PC-3 (cell line): ENCODE measurements at regions of chr3 and their contacts with region 1.

Region 1: GRCh38 chr3:35664460-35664919 is 25.2 kb downstream of the ARPP21 start:
- DNase-seq: no peak
- ATAC-seq: no peak
- H3K4me3 ChIP-seq: no peak overlapping the region
- H3K27ac ChIP-seq: no peak overlapping the region
- H3K4me1 ChIP-seq: peaks cover 21% of the 10 kb centered on the region
- H3K27me3 ChIP-seq: no peaks in the 10 kb centered on the region
- CTCF ChIP-seq: no peak

Region 2: GRCh38 chr3:33883538-33883950 is 1780.9 kb before region 1 on chr3:
- CTCF ChIA-PET with region 1: no interaction called
- POLR2A ChIA-PET with region 1: no interaction called
- intact Hi-C with region 1: loop called (anchors 5 kb)
- DNase-seq: peak; percentile 85
- ATAC-seq: peak; percentile 41
- H3K4me3 ChIP-seq: no peak overlapping the region
- H3K27ac ChIP-seq: no peak overlapping the region
- H3K4me1 ChIP-seq: no peaks in the 10 kb centered on the region
- H3K27me3 ChIP-seq: no peaks in the 10 kb centered on the region
- CTCF ChIP-seq: peak; percentile 96

Region 3: GRCh38 chr3:35064761-35065160 is 599.7 kb before region 1 on chr3:
- CTCF ChIA-PET with region 1: no interaction called
- POLR2A ChIA-PET with region 1: no interaction called
- intact Hi-C with region 1: loop called (anchors 2 kb)
- DNase-seq: no peak
- ATAC-seq: no peak
- H3K4me3 ChIP-seq: no peak overlapping the region
- H3K27ac ChIP-seq: no peak overlapping the region
- H3K4me1 ChIP-seq: no peaks in the 10 kb centered on the region
- H3K27me3 ChIP-seq: no peaks in the 10 kb centered on the region
- CTCF ChIP-seq: no peak

Region 4: DNA sequence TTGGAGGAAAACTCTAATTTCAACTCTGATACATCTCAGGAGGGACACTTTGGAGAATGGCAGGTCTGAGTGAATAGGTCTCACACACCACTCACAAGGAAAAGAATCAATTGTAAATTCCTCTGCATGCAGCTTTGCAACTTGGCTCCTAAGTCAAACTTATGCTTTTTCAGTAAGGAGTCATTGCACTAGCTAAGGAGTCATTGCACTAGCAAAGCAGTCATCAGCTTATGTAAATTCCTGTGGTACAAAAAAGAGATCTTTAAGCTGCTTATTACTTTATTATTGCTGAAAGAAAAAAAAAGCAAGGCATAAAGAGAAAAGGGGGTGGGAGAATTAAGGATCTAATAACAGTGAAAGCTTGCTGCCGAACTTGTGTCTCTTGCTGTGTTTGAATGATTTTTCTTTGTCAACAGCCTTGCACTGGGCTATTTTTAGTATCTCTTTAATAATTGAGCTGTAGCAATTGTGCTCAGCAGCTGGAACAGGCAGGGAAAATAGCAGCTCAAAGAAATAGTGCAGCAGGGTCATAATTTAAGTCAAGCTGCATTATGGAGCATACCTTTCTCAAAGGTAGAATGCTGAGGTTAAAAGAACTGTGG is 179.5 kb before region 1 on chr3:
- CTCF ChIA-PET with region 1: no interaction called
- POLR2A ChIA-PET with region 1: no interaction called
- intact Hi-C with region 1: loop called (anchors 5 kb)
- DNase-seq: no peak
- ATAC-seq: no peak
- H3K4me3 ChIP-seq: no peak overlapping the region
- H3K27ac ChIP-seq: no peak overlapping the region
- H3K4me1 ChIP-seq: no peaks in the 10 kb centered on the region
- H3K27me3 ChIP-seq: no peaks in the 10 kb centered on the region
- CTCF ChIP-seq: no peak

Region 5: DNA sequence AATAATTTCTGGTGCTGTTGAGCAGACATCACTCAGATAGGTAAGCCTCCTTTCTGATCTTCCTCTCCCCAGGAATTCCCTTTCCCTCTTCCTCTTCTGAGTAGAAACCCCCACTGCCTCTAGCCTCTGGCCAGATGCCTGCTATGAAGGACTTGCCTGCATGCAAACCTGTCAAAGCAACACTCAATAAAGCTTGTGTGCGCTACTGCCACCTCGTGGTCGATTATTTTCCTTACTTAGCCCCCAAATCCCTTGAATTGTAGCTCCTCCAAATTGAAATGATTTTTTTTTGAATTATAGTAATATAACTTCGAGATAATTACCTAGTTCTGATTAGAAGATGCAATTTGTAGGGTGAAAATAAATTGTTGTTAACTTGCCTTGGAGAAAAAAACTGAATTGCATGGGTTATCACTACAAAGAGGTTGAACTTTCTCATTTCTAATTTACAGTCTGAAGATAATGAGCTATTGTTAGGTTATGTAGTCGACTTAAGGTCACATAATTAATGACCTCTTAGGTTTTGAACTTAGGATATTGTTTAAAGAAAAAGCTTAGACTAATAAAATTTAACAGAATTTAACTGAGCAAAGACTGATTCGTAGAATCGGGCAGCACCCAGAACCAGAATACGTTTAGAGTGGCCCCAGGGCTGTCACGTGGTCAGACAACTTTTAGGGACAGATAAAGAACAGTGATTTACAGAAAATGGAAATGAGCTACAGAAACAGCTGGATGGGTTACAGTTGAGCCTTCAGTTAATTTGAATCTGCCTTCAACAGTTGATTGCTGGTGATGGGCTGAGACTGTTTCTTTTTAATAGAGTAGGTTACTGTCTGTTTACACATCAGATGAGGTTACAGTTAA is 244.1 kb after region 1 on chr3:
- CTCF ChIA-PET with region 1: interaction called, 12 read pairs
- POLR2A ChIA-PET with region 1: no interaction called
- intact Hi-C with region 1: loop called (anchors 2 kb)
- DNase-seq: peak; percentile 86
- ATAC-seq: peak; percentile 86
- H3K4me3 ChIP-seq: no peak overlapping the region
- H3K27ac ChIP-seq: no peak overlapping the region
- H3K4me1 ChIP-seq: no peaks in the 10 kb centered on the region
- H3K27me3 ChIP-seq: no peaks in the 10 kb centered on the region
- CTCF ChIP-seq: peak; percentile 91

Region 6: DNA sequence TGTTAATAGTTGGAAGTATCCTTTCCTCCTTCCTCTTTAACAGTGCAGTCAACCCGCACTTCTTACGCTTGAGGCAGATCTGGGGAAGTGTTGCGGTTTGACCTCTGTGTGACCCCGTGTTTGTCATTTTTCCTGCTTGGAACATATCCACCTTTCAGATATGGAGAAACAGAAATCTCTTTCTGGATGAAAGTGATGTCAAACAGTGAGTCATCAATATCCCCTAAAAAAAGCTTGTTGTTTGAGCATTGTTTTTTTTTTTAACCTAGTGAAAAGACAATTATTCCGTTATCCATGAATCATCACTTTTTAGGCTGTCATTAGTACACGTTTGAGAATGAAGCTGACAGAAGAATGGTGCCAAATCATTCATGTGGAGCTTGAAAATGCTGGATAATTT is 268.5 kb after region 1 on chr3:
- CTCF ChIA-PET with region 1: no interaction called
- POLR2A ChIA-PET with region 1: no interaction called
- intact Hi-C with region 1: loop called (anchors 5 kb)
- DNase-seq: peak; percentile 98
- ATAC-seq: peak; percentile 85
- H3K4me3 ChIP-seq: no peak overlapping the region
- H3K27ac ChIP-seq: peak overlapping the region; percentile 66
- H3K4me1 ChIP-seq: peaks cover 41% of the 10 kb centered on the region
- H3K27me3 ChIP-seq: no peaks in the 10 kb centered on the region
- CTCF ChIP-seq: no peak

Region 7: GRCh38 chr3:35946121-35946853 is 281.8 kb after region 1 on chr3:
- CTCF ChIA-PET with region 1: no interaction called
- POLR2A ChIA-PET with region 1: no interaction called
- intact Hi-C with region 1: loop called (anchors 1 kb)
- DNase-seq: peak; percentile 68
- ATAC-seq: peak; percentile 18
- H3K4me3 ChIP-seq: no peak overlapping the region
- H3K27ac ChIP-seq: peak overlapping the region; percentile 86
- H3K4me1 ChIP-seq: peaks cover 34% of the 10 kb centered on the region
- H3K27me3 ChIP-seq: no peaks in the 10 kb centered on the region
- CTCF ChIP-seq: peak; percentile 76